ENCODE measurements at regions of chr11 and their contacts with region 1.

Region 1: GRCh38 chr11:46616998-46617675 is at the starts of genes ATG13 and HARBI1:
- DNase-seq: peak; percentile 89 to 91
- ATAC-seq: peak; percentile 98 to 99 (median 99)
- H3K4me3 ChIP-seq: peak within 1 kb of the TSS; percentile 74 to 100 (median 98)
- H3K27ac ChIP-seq: peak within 1 kb of the TSS; percentile 77 to 98 (median 94)
- H3K4me1 ChIP-seq: peaks cover 0 to 63% (median 39%) of the 10 kb centered on the region in 9 donors
- H3K27me3 ChIP-seq: no peaks in the 10 kb centered on the region
- CTCF ChIP-seq: no peak
- total RNA-seq, gene ATG13: 35.7 to 50.6 (median 42.5) TPM
- total RNA-seq, gene HARBI1: 2.6 to 4.4 (median 3.2) TPM

Region 2: DNA sequence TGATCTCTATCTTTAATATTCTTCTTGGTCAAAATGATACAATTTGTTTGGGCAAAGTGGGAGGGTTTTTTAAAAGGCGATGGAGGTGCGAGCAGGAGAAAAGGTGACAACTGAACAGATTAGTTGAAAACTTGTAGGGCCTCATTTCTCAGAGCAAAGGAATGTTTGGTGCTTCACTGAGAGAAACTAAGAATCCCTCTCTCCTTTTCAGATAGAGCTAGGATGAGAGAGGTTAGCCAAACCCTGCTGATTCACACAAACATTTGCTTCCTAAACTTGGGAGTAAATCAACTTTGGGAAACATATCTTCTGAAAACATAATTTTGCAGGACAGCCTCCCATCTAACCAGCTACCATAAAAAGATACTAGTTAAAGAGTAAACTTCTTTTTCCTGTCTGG is 552.9 kb before region 1 on chr11:
- intact Hi-C with region 1: no loop called
- DNase-seq: no peak
- ATAC-seq: no peak
- H3K4me3 ChIP-seq: no peak overlapping the region
- H3K27ac ChIP-seq: no peak overlapping the region
- H3K4me1 ChIP-seq: peaks cover 0 to 12% (median 0%) of the 10 kb centered on the region in 9 donors
- H3K27me3 ChIP-seq: no peaks in the 10 kb centered on the region
- CTCF ChIP-seq: no peak

Region 3: DNA sequence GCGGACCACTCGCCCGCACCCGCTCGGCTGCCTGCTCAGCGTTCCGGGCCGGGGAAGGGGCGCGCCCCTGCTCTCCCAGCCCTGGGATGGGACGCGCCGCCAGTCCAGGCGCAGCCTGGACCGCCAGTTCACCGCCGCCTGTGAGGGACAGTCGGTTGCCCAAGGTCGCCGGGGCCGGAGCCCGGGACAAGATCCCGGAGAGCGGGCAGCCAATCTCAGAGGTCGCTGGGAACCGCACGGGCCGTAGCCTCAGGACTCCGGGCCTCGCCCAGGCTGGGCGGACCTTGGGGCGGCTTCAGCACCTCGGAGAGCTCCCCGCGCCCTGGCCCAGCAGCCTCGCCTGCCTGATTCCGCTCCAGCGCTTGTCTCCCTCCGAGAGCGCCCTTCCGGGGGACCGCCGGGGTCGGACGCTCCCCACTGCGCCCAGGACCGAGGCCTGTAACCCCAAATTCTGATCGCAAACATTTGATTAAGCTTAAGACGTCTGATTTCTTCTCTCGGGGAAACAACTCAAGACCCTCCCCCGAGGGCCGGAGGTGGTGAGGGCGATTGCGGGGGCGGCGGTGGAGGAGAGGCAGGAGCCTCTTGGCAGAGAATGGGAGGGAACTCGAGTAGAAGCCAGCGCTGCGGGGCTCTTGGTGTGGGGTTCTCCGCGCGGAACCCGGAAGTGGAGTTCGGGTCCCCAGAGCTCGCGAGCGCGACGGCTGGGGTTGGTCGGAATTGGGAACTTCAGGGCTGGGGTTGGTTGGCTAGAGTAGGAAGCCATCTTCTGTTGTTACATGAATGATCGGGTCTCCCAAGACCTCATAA is 224.5 kb before region 1 on chr11:
- intact Hi-C with region 1: loop called in 4 of 10 experiments (anchors 10 kb)
- DNase-seq: peak; percentile 84 to 91
- ATAC-seq: peak; percentile 88 to 94 (median 92)
- H3K4me3 ChIP-seq: peak overlapping the region; percentile 25 to 54 (median 48)
- H3K27ac ChIP-seq: no peak overlapping the region
- H3K4me1 ChIP-seq: peaks cover 19 to 49% (median 34%) of the 10 kb centered on the region in 9 donors
- H3K27me3 ChIP-seq: peaks cover 21 to 55% (median 45%) of the 10 kb centered on the region in 7 donors
- CTCF ChIP-seq: peak in 1 of 9 donors; percentile 13

Region 4: DNA sequence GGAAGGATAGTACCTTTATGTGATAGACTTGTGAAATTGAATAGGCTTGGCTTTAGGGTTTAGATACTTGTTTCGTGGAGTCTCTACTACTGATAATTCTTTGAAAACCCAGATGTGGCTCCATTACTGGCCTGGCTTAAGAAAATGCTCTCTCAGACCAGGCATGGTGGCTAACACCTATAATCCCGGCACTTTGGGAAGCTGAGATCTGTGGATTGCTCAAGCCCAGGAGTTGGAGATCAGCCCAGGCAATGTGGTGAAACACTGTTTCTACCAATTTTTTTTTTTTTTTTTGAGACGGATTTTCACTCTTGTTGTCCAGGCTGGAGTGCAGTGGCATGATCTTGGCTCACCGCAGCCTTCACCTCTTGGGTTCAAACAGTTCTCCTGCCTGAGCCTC is 41.1 kb after region 1 on chr11:
- intact Hi-C with region 1: no loop called
- DNase-seq: no peak
- ATAC-seq: peak in 4 of 8 donors; percentile 10 to 72 (median 36)
- H3K4me3 ChIP-seq: no peak overlapping the region
- H3K27ac ChIP-seq: peak overlapping the region in 6 of 10 donors; percentile 14 to 59 (median 38)
- H3K4me1 ChIP-seq: peaks cover 3 to 23% (median 15%) of the 10 kb centered on the region in 9 donors
- H3K27me3 ChIP-seq: no peaks in the 10 kb centered on the region
- CTCF ChIP-seq: no peak

Region 5: GRCh38 chr11:46669711-46670139 is 52.6 kb after region 1 on chr11:
- intact Hi-C with region 1: loop called in 1 of 10 experiments (anchors 5 kb)
- DNase-seq: no peak
- ATAC-seq: peak in 2 of 8 donors; percentile 19 to 28
- H3K4me3 ChIP-seq: no peak overlapping the region
- H3K27ac ChIP-seq: peak overlapping the region in 7 of 10 donors; percentile 9 to 88 (median 25)
- H3K4me1 ChIP-seq: peaks cover 20 to 80% (median 48%) of the 10 kb centered on the region in 9 donors
- H3K27me3 ChIP-seq: no peaks in the 10 kb centered on the region
- CTCF ChIP-seq: peak in 7 of 9 donors; percentile 27 to 53 (median 39)

Region 6: DNA sequence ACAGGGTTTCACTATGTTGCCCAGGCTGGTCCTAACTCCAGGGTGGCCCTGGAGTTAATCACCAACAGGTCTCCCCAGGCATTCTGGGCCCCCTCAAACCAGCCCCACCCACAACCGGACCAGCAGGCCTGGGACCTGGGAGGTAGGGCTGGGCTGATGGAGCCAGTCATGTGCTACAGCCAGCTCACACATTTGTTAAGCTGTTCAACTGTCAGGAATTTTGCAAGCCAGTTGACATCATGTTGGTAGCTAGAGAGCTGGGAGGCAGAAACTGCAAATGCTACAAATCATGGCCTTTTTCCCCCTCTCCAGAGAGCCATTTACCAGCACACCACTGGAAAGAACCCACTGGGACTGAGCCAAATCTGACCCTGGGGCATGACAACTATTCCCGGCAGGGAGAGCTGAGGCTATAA is 76.5 kb after region 1 on chr11:
- intact Hi-C with region 1: loop called in 1 of 10 experiments (anchors 10 kb)
- DNase-seq: no peak
- ATAC-seq: peak in 4 of 8 donors; percentile 13 to 19 (median 18)
- H3K4me3 ChIP-seq: no peak overlapping the region
- H3K27ac ChIP-seq: peak overlapping the region in 8 of 10 donors; percentile 24 to 96 (median 80)
- H3K4me1 ChIP-seq: peaks cover 25 to 56% (median 50%) of the 10 kb centered on the region in 9 donors
- H3K27me3 ChIP-seq: no peaks in the 10 kb centered on the region
- CTCF ChIP-seq: no peak

Region 7: GRCh38 chr11:46700241-46701077 is 83.3 kb after region 1 on chr11 and contains the starts of genes ARHGAP1 and ZNF408:
- intact Hi-C with region 1: loop called in 3 of 10 experiments (anchors 1 to 10 kb)
- DNase-seq: peak; percentile 99 to 100
- ATAC-seq: peak; percentile 89 to 97 (median 96)
- H3K4me3 ChIP-seq: peak within 1 kb of the TSS; percentile 73 to 98 (median 86)
- H3K27ac ChIP-seq: peak within 1 kb of the TSS; percentile 86 to 98 (median 94)
- H3K4me1 ChIP-seq: peaks cover 26 to 65% (median 63%) of the 10 kb centered on the region in 9 donors
- H3K27me3 ChIP-seq: no peaks in the 10 kb centered on the region
- CTCF ChIP-seq: no peak
- total RNA-seq, gene ARHGAP1: 59.0 to 268 (median 140) TPM
- total RNA-seq, gene ZNF408: 5.0 to 8.9 (median 6.7) TPM

Region 8: GRCh38 chr11:46736615-46737014 is 119.5 kb after region 1 on chr11:
- intact Hi-C with region 1: no loop called
- DNase-seq: no peak
- ATAC-seq: no peak
- H3K4me3 ChIP-seq: no peak overlapping the region
- H3K27ac ChIP-seq: no peak overlapping the region
- H3K4me1 ChIP-seq: peaks cover 0 to under 1% (median 0%) of the 10 kb centered on the region in 9 donors
- H3K27me3 ChIP-seq: no peaks in the 10 kb centered on the region
- CTCF ChIP-seq: no peak